HepG2 (cell line): ENCODE measurements at regions of chr2 and their contacts with region 1.

Region 1: DNA sequence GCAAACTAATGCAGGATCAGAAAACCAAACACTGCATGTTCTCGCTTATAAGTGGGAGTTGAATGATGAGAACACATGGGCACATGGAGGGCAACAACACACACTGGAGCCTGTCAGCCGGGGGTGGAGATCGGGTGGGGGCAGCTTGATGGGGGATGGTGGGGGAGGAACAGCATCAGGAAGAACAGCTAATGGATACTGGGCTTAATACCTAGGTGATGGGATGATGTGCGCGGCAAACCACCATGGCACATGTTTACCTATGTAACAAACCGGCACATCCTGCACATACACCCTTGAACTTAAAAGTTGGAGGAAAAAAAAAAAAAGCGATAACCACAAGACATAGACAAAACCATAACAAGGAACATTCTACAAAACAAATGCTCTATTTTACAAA is 10.4 kb downstream of the CHMP3 start:
- DNase-seq: no peak
- ATAC-seq: no peak
- H3K4me3 ChIP-seq: no peak overlapping the region
- H3K27ac ChIP-seq: no peak overlapping the region
- H3K4me1 ChIP-seq: peaks cover 28% of the 10 kb centered on the region
- H3K27me3 ChIP-seq: no peaks in the 10 kb centered on the region
- CTCF ChIP-seq: no peak
- EP300 ChIP-seq: no peak
- POLR2A ChIP-seq: no peak
- RAD21 ChIP-seq: no peak

Region 2: DNA sequence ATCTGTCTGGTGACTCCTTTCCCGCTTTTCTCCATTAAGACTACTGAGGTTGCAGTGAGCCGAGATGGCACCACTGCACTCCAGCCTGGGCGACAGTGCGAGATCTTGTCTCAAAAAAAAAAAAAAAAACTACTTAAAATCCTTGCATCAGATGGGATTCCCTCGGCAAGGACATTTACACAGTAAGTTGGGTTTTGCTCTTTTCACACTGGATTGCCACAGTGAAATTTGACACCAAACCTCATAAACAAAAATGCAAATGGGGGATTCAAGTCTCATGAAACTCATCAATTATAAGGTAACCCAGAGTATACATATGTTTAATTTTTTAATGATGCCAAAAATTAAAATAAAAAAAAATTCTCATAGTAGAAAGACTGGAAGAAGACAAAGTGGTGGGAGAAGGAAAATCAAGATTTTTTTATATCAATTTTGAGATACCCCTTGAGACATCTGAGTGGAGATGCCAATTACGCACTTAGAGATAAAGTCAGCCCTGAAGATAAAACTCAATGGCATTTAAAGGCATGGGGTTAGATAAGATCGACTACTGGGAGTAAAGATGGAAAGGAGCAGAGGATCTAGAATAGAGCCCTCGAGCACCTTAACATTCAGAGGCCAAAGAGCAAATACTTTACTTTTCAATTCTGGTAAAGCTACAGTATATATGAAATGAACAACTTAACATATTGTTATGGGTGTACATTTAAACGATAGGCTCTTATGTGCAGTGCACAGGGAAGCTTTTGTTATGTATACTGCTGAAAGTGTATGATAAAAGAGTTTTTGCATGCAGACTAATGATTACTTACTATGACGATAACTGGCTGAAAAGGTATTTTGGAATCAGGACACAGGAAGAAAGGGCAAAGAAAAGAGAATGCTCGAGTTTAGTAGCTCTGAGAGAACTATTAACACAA is 27.2 kb before region 1 on chr2:
- CTCF ChIA-PET with region 1: no interaction called
- POLR2A ChIA-PET with region 1: no interaction called
- in situ Hi-C with region 1: no loop called
- intact Hi-C with region 1: loop called (anchors 2 kb)
- DNase-seq: no peak
- ATAC-seq: no peak
- H3K4me3 ChIP-seq: no peak overlapping the region
- H3K27ac ChIP-seq: no peak overlapping the region
- H3K4me1 ChIP-seq: peaks cover 5% of the 10 kb centered on the region; the same call in 1 of the 2 replicates
- H3K27me3 ChIP-seq: no peaks in the 10 kb centered on the region
- CTCF ChIP-seq: no peak
- EP300 ChIP-seq: no peak
- POLR2A ChIP-seq: no peak
- RAD21 ChIP-seq: no peak